ENCODE measurements at regions of chr7 and their contacts with region 1.

Region 1: GRCh38 chr7:4681886-4682620 is at the start of gene FOXK1:
- DNase-seq: peak; percentile 82 to 88
- ATAC-seq: peak; percentile 78 to 89 (median 82)
- H3K4me3 ChIP-seq: peak within 1 kb of the TSS; percentile 95
- H3K27ac ChIP-seq: peak within 1 kb of the TSS; percentile 84
- H3K4me1 ChIP-seq: peaks cover 31% of the 10 kb centered on the region
- H3K27me3 ChIP-seq: no peaks in the 10 kb centered on the region
- CTCF ChIP-seq: no peak
- total RNA-seq, gene FOXK1: 16.8 to 26.4 (median 21.5) TPM

Region 2: GRCh38 chr7:4641667-4642467 is 40.2 kb before region 1 on chr7:
- intact Hi-C with region 1: loop called (anchors 1 kb)
- DNase-seq: peak; percentile 95 to 98
- ATAC-seq: peak; percentile 95 to 96 (median 96)
- H3K4me3 ChIP-seq: peak overlapping the region; percentile 81
- H3K27ac ChIP-seq: peak overlapping the region; percentile 94
- H3K4me1 ChIP-seq: peaks cover 5% of the 10 kb centered on the region
- H3K27me3 ChIP-seq: no peaks in the 10 kb centered on the region
- CTCF ChIP-seq: peak; percentile 44

Region 3: DNA sequence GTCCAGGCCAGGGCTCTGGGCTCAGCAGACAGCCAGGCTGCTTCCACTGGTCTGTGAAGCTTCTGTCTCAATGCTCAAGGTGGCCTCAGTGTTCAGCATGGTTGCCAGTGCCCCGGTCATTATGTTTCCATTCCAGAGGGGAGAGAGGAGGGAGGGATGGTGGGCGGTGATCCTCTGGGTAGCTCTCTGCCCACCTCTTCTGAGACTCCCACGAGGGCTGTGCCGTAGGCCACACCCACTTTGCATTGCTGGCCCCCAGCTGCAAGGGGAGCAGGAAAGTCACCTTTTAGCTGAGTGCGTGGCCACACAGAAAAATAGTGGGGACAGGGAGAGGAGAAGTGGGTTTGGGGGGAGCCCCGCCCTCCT is 42.6 kb after region 1 on chr7:
- intact Hi-C with region 1: loop called in 1 of 2 experiments (anchors 5 kb)
- DNase-seq: no peak
- ATAC-seq: peak in 3 of 4 donors; percentile 5 to 14 (median 12)
- H3K4me3 ChIP-seq: peak overlapping the region; percentile 69
- H3K27ac ChIP-seq: peak overlapping the region; percentile 97
- H3K4me1 ChIP-seq: peaks cover 44% of the 10 kb centered on the region
- H3K27me3 ChIP-seq: no peaks in the 10 kb centered on the region
- CTCF ChIP-seq: no peak

Region 4: DNA sequence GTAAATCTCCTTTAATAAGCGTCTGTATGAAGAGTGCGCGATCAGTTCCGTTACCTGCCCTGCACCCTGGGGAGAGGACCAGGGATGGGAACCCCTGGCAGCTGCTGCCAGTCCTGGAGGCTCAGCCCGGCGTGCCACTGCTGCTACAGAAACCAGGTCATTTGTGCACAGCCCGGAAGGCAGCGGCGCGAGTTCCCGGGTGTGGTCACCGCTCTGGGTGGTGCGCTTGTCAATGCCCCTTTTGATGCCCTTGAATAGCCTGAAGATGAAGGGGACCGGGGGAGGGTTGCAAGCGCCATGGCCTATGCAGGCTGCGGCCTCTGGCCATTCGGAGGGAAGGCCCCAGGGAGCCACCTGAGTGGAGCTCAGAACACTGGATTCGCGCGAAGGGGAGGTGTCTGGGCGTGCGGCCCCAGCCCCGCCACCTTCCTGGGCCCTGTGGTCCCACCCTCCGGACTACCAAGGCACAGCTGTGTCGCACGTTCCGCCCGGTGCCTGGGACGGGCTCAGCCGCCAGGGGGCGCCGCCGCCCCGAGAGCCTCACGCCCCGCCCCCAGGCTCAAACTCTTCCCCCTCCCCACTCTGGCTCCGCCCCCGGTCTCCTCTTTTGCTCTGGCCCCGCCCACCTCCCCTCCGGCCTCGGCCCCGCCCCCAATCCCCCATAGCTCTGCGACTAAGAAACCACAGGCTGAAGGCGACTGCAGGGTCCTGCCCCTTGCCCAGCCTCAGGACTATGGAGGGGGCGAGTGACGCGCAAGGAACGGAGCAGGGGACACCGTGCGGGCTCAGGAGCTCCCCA is 109.9 kb after region 1 on chr7:
- intact Hi-C with region 1: no loop called
- DNase-seq: peak; percentile 74 to 92
- ATAC-seq: peak; percentile 71 to 93 (median 85)
- H3K4me3 ChIP-seq: peak overlapping the region; percentile 61
- H3K27ac ChIP-seq: peak overlapping the region; percentile 4
- H3K4me1 ChIP-seq: peaks cover 6% of the 10 kb centered on the region
- H3K27me3 ChIP-seq: no peaks in the 10 kb centered on the region
- CTCF ChIP-seq: peak; percentile 79

Measured in psoas muscle (tissue), 8 donors.